Activated CD4-positive, alpha-beta T cell treated with anti-CD3 and anti-CD28 coated beads for 36 hours (primary cell): ENCODE measurements at regions of chr3 and their contacts with region 1.

Region 1: GRCh38 chr3:13895155-13896105 is 15.6 kb upstream of the WNT7A start:
- DNase-seq: peak; percentile 99
- ATAC-seq: peak; percentile 100
- H3K4me3 Mint-ChIP-seq: peak overlapping the region; percentile 83
- H3K27ac Mint-ChIP-seq: peak overlapping the region; percentile 82
- H3K4me1 Mint-ChIP-seq: peaks cover 19% of the 10 kb centered on the region
- H3K27me3 Mint-ChIP-seq: no peaks in the 10 kb centered on the region

Region 2: DNA sequence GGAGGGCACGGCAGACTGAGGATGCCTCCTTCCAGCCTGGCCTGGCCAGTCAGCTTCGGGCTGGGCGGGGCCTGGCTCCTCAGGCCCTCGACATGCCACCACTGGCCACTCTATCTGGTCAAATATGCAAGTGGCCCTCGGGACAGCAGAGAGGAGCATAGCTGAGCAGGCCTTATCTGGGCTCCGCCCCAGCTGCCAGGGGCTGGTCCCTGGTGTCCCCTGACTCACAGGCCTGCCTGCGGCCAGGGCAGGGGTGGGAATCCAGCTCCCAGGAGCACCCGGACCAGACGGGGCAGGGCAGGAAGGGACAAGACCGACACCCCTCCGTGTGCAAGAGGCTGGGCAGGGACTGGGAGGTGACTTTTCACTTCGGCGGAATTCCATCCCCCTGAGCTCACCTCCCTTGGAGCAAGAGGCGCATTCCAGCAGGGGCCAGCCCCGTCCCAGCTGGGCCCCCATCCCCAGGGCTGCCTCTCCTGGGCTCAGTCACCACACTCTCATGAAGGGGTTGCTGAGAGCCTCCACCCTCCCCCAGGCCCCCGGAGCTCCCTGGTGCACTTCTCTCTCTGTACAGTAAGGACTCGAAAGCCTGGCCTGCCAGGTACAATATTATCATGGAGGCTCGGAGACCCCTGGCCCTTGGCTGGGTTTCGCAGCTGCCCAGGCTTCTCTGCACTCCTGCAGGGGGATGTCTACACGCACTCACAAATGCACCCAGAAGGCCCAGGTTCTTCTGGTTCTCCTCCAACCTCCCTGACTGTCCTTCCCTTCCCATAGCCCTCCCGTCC is 45.1 kb before region 1 on chr3:
- CTCF ChIA-PET with region 1: no interaction called
- POLR2A ChIA-PET with region 1: no interaction called
- intact Hi-C with region 1: no loop called
- DNase-seq: no peak
- ATAC-seq: no peak
- H3K4me3 Mint-ChIP-seq: no peak overlapping the region
- H3K27ac Mint-ChIP-seq: no peak overlapping the region
- H3K4me1 Mint-ChIP-seq: peaks cover 34% of the 10 kb centered on the region
- H3K27me3 Mint-ChIP-seq: no peaks in the 10 kb centered on the region

Region 3: DNA sequence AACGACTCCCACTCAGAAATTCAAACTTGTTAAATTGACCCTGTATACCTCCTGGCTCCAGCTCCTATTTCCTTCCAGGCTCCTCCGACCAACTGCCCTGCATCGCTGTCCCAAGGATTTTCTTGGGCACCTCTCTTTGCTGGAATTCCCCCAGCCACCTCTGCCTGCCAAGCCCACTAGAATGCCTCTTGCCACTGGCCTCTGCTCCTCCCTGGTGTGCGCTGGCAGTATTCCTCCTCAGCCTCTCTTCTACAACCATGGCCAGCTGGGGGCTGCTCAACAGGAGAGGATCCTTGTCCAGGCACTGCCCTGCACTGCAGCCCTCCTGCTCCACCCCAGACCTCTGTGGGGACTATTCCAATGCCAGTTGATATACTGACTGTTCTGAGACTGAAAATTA is 23.0 kb before region 1 on chr3:
- CTCF ChIA-PET with region 1: no interaction called
- POLR2A ChIA-PET with region 1: no interaction called
- intact Hi-C with region 1: no loop called
- DNase-seq: no peak
- ATAC-seq: no peak
- H3K4me3 Mint-ChIP-seq: no peak overlapping the region
- H3K27ac Mint-ChIP-seq: no peak overlapping the region
- H3K4me1 Mint-ChIP-seq: peaks cover 25% of the 10 kb centered on the region
- H3K27me3 Mint-ChIP-seq: no peaks in the 10 kb centered on the region

Region 4: GRCh38 chr3:13884851-13885703 is 10.4 kb before region 1 on chr3:
- CTCF ChIA-PET with region 1: interaction called, 16 read pairs
- POLR2A ChIA-PET with region 1: no interaction called
- intact Hi-C with region 1: no loop called
- DNase-seq: peak; percentile 82
- ATAC-seq: peak; percentile 72
- H3K4me3 Mint-ChIP-seq: no peak overlapping the region
- H3K27ac Mint-ChIP-seq: no peak overlapping the region
- H3K4me1 Mint-ChIP-seq: peaks cover 4% of the 10 kb centered on the region
- H3K27me3 Mint-ChIP-seq: peaks cover 9% of the 10 kb centered on the region

Region 5: GRCh38 chr3:14203521-14204079 is 308.2 kb after region 1 on chr3:
- CTCF ChIA-PET with region 1: interaction called, 12 read pairs
- POLR2A ChIA-PET with region 1: no interaction called
- intact Hi-C with region 1: no loop called
- DNase-seq: peak; percentile 56
- ATAC-seq: peak; percentile 60
- H3K4me3 Mint-ChIP-seq: no peak overlapping the region
- H3K27ac Mint-ChIP-seq: no peak overlapping the region
- H3K4me1 Mint-ChIP-seq: peaks cover 2% of the 10 kb centered on the region
- H3K27me3 Mint-ChIP-seq: no peaks in the 10 kb centered on the region

Region 6: GRCh38 chr3:14261229-14261628 is 365.8 kb after region 1 on chr3:
- CTCF ChIA-PET with region 1: interaction called, 4 read pairs
- POLR2A ChIA-PET with region 1: no interaction called
- intact Hi-C with region 1: loop called (anchors 2 to 10 kb)
- DNase-seq: peak; percentile 87
- ATAC-seq: peak; percentile 85
- H3K4me3 Mint-ChIP-seq: no peak overlapping the region
- H3K27ac Mint-ChIP-seq: no peak overlapping the region
- H3K4me1 Mint-ChIP-seq: no peaks in the 10 kb centered on the region
- H3K27me3 Mint-ChIP-seq: no peaks in the 10 kb centered on the region

Region 7: DNA sequence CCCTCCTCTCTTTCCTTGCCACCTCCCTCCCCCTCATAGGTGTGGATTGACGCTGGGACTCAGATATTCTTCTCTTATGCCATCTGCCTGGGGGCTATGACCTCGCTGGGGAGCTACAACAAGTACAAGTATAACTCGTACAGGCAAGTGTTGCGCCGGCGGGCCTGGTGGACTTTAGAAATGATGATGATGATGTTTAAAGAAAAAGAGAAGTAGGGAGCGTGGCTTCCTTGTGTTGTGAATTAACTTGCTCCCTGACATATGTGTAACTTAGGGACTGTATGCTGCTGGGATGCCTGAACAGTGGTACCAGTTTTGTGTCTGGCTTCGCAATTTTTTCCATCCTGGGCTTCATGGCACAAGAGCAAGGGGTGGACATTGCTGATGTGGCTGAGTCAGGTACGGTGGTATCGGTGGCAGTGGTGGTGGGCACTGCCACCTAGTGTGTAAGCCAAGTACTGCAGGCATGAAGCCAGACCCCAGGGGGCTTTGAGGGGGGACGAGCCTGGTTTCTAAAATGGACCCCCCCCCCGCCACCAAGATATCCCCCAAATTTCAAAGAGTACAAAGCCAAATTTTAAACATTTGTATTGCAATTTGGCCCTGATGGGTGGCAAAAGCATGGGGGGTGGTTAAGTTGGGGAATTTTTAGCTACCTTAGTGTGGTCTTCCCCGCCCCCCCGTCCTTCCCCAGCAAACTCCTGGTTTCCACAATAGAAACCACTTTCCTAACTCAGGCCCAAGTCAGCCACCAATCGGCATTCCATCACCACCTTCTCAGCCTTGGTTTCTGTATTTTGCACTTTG is 572.6 kb after region 1 on chr3:
- CTCF ChIA-PET with region 1: no interaction called
- POLR2A ChIA-PET with region 1: no interaction called
- intact Hi-C with region 1: loop called in 1 of 2 experiments (anchors 2 kb)
- DNase-seq: peak; percentile 58
- ATAC-seq: peak; percentile 28
- H3K4me3 Mint-ChIP-seq: no peak overlapping the region
- H3K27ac Mint-ChIP-seq: no peak overlapping the region
- H3K4me1 Mint-ChIP-seq: peaks cover 6% of the 10 kb centered on the region
- H3K27me3 Mint-ChIP-seq: no peaks in the 10 kb centered on the region